ENCODE measurements at regions of chr5 and their contacts with region 1.

Region 1: GRCh38 chr5:83721953-83722901 is 1.6 kb upstream of the HAPLN1 start:
- DNase-seq: peak; percentile 85
- ATAC-seq: peak; percentile 66
- H3K4me3 Mint-ChIP-seq: peak overlapping the region; percentile 89
- H3K27ac Mint-ChIP-seq: peak overlapping the region; percentile 67
- H3K4me1 Mint-ChIP-seq: peaks cover 58% of the 10 kb centered on the region
- H3K27me3 Mint-ChIP-seq: no peaks in the 10 kb centered on the region
- CTCF ChIP-seq: no peak

Region 2: GRCh38 chr5:83149671-83150070 is 572.6 kb before region 1 on chr5:
- CTCF ChIA-PET with region 1: no interaction called
- POLR2A ChIA-PET with region 1: no interaction called
- DNase-seq: no peak
- ATAC-seq: no peak
- H3K4me3 Mint-ChIP-seq: no peak overlapping the region
- H3K27ac Mint-ChIP-seq: no peak overlapping the region
- H3K4me1 Mint-ChIP-seq: no peaks in the 10 kb centered on the region
- H3K27me3 Mint-ChIP-seq: no peaks in the 10 kb centered on the region
- CTCF ChIP-seq: no peak

Region 3: GRCh38 chr5:83662558-83662957 is 59.7 kb before region 1 on chr5:
- CTCF ChIA-PET with region 1: no interaction called
- POLR2A ChIA-PET with region 1: no interaction called
- DNase-seq: no peak
- ATAC-seq: no peak
- H3K4me3 Mint-ChIP-seq: no peak overlapping the region
- H3K27ac Mint-ChIP-seq: no peak overlapping the region
- H3K4me1 Mint-ChIP-seq: peaks cover 13% of the 10 kb centered on the region
- H3K27me3 Mint-ChIP-seq: no peaks in the 10 kb centered on the region
- CTCF ChIP-seq: no peak

Region 4: DNA sequence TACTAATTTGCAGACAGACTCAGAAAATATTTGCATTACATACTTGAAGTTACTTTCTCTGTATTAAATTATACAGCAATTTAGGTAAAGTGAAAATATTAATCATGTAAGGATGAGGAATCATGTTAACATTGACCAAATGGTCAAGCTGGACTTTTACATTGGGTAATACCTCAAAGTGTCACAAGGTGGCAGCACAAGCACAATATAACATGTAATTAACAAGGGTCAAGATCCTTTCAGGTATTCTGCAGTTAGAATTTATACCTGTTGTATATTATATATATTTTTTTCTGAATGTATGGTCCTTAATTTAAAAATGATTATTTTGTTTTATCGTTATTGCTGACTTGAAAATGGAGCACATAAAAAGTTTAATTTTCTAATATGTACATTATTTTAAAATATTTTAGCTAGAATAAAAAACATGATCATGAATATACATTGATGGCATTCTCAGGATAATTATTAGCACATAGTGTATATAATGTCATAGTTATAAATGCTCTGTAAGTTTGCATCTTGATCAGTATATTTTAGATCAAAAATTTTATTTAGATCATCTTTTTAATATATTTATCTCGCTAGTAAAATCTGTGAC is 10.1 kb before region 1 on chr5:
- CTCF ChIA-PET with region 1: interaction called, 10 read pairs
- POLR2A ChIA-PET with region 1: no interaction called
- DNase-seq: peak; percentile 43
- ATAC-seq: no peak; the same call in 1 of the 2 replicates
- H3K4me3 Mint-ChIP-seq: no peak overlapping the region
- H3K27ac Mint-ChIP-seq: no peak overlapping the region
- H3K4me1 Mint-ChIP-seq: peaks cover 41% of the 10 kb centered on the region
- H3K27me3 Mint-ChIP-seq: no peaks in the 10 kb centered on the region
- CTCF ChIP-seq: peak; percentile 73

Region 5: DNA sequence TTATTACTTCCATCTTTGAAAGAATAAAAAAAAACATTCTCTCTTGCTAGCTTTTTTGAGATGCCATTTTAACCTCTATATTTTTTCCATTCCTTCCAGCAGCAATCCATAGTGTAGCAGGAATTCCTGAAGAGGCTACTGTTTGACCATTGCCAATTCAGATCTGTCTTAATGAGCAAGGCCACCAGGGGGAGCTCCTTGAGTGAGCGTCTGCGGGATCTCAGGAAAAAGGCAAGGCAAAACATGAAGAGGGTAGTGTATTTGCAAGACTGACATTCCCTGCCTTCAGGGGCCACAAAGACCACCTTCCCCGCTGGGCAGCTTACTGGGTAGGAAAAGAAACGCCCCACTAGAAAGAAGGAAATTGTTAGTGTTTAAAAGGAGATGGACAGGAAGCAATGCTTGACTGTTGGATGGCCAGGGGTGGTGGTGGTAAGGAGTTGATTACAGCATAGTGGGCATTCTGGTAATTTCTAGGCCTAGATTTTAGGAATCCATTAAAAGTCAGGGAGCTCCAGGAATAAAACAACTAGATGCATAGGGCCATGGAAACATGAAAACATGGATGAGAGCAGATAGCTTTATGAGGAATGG is 205.0 kb after region 1 on chr5:
- CTCF ChIA-PET with region 1: interaction called, 16 read pairs
- POLR2A ChIA-PET with region 1: no interaction called
- DNase-seq: peak; percentile 92
- ATAC-seq: peak; percentile 86
- H3K4me3 Mint-ChIP-seq: no peak overlapping the region
- H3K27ac Mint-ChIP-seq: no peak overlapping the region
- H3K4me1 Mint-ChIP-seq: peaks cover 19% of the 10 kb centered on the region
- H3K27me3 Mint-ChIP-seq: no peaks in the 10 kb centered on the region
- CTCF ChIP-seq: peak; percentile 77

Measured in WTC11 (cell line).